Mammary epithelial cell (primary cell): ENCODE measurements at regions of chr1 and their contacts with region 1.

Region 1: GRCh38 chr1:22930235-22930912 is 42.3 kb downstream of the LACTBL1 start:
- DNase-seq: peak; percentile 16
- H3K4me3 ChIP-seq: no peak overlapping the region
- H3K27ac ChIP-seq: no peak overlapping the region
- H3K4me1 ChIP-seq: no peaks in the 10 kb centered on the region
- H3K27me3 ChIP-seq: no peaks in the 10 kb centered on the region
- CTCF ChIP-seq: peak; percentile 67 to 82

Region 2: GRCh38 chr1:22665752-22666151 is 264.6 kb before region 1 on chr1:
- CTCF ChIA-PET with region 1: no interaction called
- dilution Hi-C with region 1: no loop called
- in situ Hi-C with region 1: no loop called
- intact Hi-C with region 1: loop called (anchors 1 kb)
- DNase-seq: peak; percentile 5
- H3K4me3 ChIP-seq: no peak overlapping the region
- H3K27ac ChIP-seq: no peak overlapping the region
- H3K4me1 ChIP-seq: no peaks in the 10 kb centered on the region
- H3K27me3 ChIP-seq: no peaks in the 10 kb centered on the region
- CTCF ChIP-seq: peak; percentile 34 to 50

Region 3: GRCh38 chr1:22673486-22674409 is 256.6 kb before region 1 on chr1:
- CTCF ChIA-PET with region 1: no interaction called
- dilution Hi-C with region 1: no loop called
- in situ Hi-C with region 1: no loop called
- intact Hi-C with region 1: loop called (anchors 1 kb)
- DNase-seq: peak; percentile 39
- H3K4me3 ChIP-seq: no peak overlapping the region
- H3K27ac ChIP-seq: no peak overlapping the region
- H3K4me1 ChIP-seq: no peaks in the 10 kb centered on the region
- H3K27me3 ChIP-seq: no peaks in the 10 kb centered on the region
- CTCF ChIP-seq: peak; percentile 66 to 77

Region 4: DNA sequence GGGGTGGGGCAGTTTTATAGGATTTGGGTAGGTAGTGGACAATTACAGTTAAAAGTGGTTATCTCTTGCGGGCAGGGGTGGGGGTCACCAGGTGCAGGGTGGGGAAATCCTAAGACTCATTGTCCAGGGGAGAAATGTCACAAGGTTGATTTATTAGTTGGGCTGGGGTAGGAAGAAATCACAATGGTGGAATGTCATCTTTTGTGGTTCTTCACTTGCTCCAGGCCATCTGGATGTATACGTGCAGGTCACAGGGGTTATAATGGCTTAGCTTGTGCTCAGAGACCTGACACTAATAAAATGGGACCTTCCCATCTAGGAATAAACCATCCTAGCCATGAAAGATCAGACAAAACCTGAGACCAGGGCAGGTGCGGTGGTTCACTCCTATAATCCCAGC is 73.7 kb after region 1 on chr1:
- CTCF ChIA-PET with region 1: no interaction called
- dilution Hi-C with region 1: no loop called
- in situ Hi-C with region 1: no loop called
- intact Hi-C with region 1: no loop called
- DNase-seq: peak; percentile 6
- H3K4me3 ChIP-seq: no peak overlapping the region
- H3K27ac ChIP-seq: no peak overlapping the region
- H3K4me1 ChIP-seq: no peaks in the 10 kb centered on the region
- H3K27me3 ChIP-seq: no peaks in the 10 kb centered on the region
- CTCF ChIP-seq: no peak